Endothelial cell of umbilical vein (primary cell): ENCODE measurements at regions of chr16 and their contacts with region 1.

Region 1: DNA sequence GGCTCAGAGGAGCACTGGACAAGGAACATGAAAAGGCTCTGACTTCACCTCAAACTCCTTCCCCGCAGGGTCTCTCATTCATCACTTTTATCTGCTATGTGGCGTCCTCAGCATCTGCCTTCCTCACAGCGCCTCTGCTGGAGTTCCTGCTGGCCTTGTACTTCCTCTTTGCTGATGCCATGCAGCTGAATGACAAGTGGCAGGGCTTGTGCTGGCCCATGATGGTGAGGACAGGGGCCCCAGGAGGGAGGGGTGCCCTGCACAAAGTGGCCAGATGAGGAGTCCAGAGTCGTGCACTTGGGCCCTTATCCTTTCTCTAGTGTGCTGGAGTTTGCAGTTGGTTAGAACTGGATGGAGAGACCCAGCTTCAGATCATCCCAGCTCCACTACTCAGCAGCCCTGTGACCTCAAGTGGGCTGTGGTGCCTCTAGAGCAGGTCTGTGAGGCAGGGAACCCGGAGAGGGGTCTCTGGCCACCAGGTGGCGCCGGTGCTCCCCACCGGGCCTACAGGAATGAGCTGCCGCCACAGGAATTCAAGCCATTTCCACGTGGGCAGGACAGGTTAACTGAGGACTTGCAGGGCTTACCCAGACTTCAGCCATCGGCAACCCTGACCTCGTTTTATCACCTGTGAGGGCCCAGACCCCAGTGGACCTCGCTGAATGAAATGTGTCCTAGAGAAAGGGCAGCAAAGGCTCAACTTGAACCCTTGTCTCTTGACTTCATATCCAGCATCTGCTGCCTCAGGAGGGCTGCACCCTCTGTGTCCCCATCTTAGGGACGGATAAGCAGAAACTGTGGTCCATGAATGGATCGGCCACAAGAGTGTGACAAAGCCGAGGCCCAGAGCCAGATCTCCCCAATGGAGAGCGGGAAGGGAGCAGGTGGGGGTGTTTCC is 4.0 kb downstream of the CMTM3 start:
- DNase-seq: peak; percentile 77
- H3K4me3 ChIP-seq: no peak overlapping the region
- H3K27ac ChIP-seq: peak overlapping the region; percentile 28
- H3K4me1 ChIP-seq: peaks cover 17% of the 10 kb centered on the region
- H3K27me3 ChIP-seq: no peaks in the 10 kb centered on the region
- CTCF ChIP-seq: peak; percentile 99
- POLR2A ChIP-seq: no peak

Region 2: GRCh38 chr16:66357153-66357928 is 251.1 kb before region 1 on chr16:
- CTCF ChIA-PET with region 1: no interaction called
- POLR2A ChIA-PET with region 1: no interaction called
- dilution Hi-C with region 1: no loop called
- intact Hi-C with region 1: no loop called
- DNase-seq: peak; percentile 93
- H3K4me3 ChIP-seq: no peak overlapping the region
- H3K27ac ChIP-seq: peak overlapping the region; percentile 99
- H3K4me1 ChIP-seq: peaks cover 51% of the 10 kb centered on the region
- H3K27me3 ChIP-seq: no peaks in the 10 kb centered on the region
- CTCF ChIP-seq: peak; percentile 74 to 84
- POLR2A ChIP-seq: no peak

Region 3: GRCh38 chr16:66406534-66407221 is 201.8 kb before region 1 on chr16:
- CTCF ChIA-PET with region 1: interaction called, 28 read pairs
- POLR2A ChIA-PET with region 1: no interaction called
- dilution Hi-C with region 1: no loop called
- intact Hi-C with region 1: loop called (anchors 1 kb)
- DNase-seq: peak; percentile 75
- H3K4me3 ChIP-seq: peak overlapping the region in 2 of 3 experiments; percentile 12 to 31
- H3K27ac ChIP-seq: peak overlapping the region; percentile 27
- H3K4me1 ChIP-seq: peaks cover 34% of the 10 kb centered on the region
- H3K27me3 ChIP-seq: no peaks in the 10 kb centered on the region
- CTCF ChIP-seq: peak; percentile 81
- POLR2A ChIP-seq: peak; percentile 76

Region 4: GRCh38 chr16:66552286-66553177 is 56.0 kb before region 1 on chr16 and contains the start of gene CKLF:
- CTCF ChIA-PET with region 1: interaction called, 10 read pairs
- POLR2A ChIA-PET with region 1: no interaction called
- dilution Hi-C with region 1: no loop called
- intact Hi-C with region 1: loop called (anchors 2 kb)
- DNase-seq: peak; percentile 96
- H3K4me3 ChIP-seq: peak within 1 kb of the TSS; percentile 13 to 65 (median 57)
- H3K27ac ChIP-seq: peak within 1 kb of the TSS; percentile 65
- H3K4me1 ChIP-seq: peaks cover 32% of the 10 kb centered on the region
- H3K27me3 ChIP-seq: no peaks in the 10 kb centered on the region
- CTCF ChIP-seq: no peak
- POLR2A ChIP-seq: peak; percentile 83
- total RNA-seq, gene CKLF: 80.0 and 93.4 TPM in 2 replicates

Region 5: DNA sequence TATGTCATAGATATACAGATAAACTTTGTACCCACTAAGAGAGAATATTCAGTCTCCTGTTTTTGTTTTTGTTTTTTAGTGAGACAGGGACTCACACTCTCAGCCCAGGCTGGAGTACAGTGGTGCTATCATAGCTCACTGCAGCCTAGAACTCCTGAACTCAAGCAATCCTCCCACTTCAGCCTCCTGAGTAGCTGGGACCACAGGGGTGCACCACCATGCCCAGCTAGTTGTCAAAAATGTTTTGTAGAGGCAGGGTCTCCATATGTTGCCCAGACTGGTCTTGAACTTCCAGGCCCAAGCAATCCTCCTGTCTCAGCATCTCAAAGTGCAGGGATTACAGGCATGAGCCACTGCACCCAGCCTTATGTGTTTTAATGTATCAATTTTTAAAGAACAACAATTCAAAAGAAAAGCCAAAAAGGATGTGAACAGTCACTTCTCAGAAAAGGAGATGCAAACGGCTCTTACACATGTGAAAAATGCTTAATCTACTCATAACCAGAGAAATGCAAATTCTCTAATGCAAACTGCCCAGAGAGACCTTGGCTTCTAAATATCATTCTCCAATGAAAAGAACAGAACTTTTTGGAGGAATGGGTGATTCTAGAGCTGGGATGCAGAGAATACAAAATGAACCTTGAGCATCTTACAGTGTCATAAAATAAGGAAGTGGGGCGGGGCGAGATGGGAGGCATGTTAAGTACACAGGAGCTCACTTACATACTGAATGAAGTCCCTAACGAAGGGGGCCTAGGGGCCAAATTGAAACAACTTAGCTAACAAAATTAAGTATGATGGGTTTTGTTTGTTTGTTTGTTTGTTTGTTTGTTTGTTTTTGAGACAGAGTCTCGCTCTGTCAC is 11.3 kb before region 1 on chr16:
- CTCF ChIA-PET with region 1: interaction called, 26 read pairs
- POLR2A ChIA-PET with region 1: no interaction called
- dilution Hi-C with region 1: no loop called
- intact Hi-C with region 1: no loop called
- DNase-seq: no peak
- H3K4me3 ChIP-seq: no peak overlapping the region
- H3K27ac ChIP-seq: no peak overlapping the region
- H3K4me1 ChIP-seq: no peaks in the 10 kb centered on the region
- H3K27me3 ChIP-seq: peaks cover 0 to 13% of the 10 kb centered on the region in 2 experiments
- CTCF ChIP-seq: no peak
- POLR2A ChIP-seq: no peak

Region 6: DNA sequence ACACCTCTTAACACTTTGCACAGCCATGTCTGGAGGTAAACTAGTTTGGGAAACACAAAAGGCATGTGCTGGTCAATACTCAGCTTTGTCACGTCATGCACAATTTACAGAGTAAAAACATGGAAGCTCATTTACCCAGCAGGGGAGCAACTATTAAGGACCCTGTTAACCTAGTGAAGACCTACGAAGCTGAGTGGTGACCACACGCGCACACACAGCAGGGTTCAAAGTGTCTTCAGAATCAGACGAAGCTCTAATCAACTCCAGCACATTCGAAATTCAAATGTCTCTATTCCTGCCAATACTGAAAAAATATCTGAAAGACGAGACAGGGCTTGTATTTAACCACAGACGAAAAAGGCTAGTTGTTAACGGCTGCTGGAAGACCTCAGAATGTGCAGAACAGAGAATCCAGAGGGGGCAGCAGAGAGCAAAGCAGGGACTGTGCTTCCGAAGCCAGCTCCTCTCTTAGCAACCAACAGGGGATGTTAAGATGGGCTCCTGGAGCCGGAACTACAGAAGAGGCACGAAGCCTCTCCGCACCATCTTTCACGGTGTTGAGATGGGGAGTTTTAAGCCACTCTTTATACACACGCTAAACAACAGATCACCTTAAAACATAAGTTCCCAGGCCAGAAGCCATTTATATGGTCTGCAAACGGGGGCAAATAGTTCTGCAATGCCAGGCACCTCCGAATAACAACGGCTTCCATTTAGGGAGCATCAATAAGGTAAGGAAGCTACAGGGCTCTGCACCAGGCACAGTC is 42.4 kb after region 1 on chr16:
- CTCF ChIA-PET with region 1: interaction called, 67 read pairs
- POLR2A ChIA-PET with region 1: no interaction called
- dilution Hi-C with region 1: no loop called
- intact Hi-C with region 1: no loop called
- DNase-seq: peak; percentile 81
- H3K4me3 ChIP-seq: no peak overlapping the region
- H3K27ac ChIP-seq: no peak overlapping the region
- H3K4me1 ChIP-seq: no peaks in the 10 kb centered on the region
- H3K27me3 ChIP-seq: no peaks in the 10 kb centered on the region
- CTCF ChIP-seq: peak; percentile 94
- POLR2A ChIP-seq: no peak

Region 7: GRCh38 chr16:66740010-66740409 is 131.5 kb after region 1 on chr16:
- CTCF ChIA-PET with region 1: interaction called, 31 read pairs
- POLR2A ChIA-PET with region 1: no interaction called
- dilution Hi-C with region 1: no loop called
- intact Hi-C with region 1: loop called (anchors 5 kb)
- DNase-seq: peak; percentile 54
- H3K4me3 ChIP-seq: no peak overlapping the region
- H3K27ac ChIP-seq: peak overlapping the region; percentile 97
- H3K4me1 ChIP-seq: peaks cover 34% of the 10 kb centered on the region
- H3K27me3 ChIP-seq: no peaks in the 10 kb centered on the region
- CTCF ChIP-seq: peak; percentile 58 to 60
- POLR2A ChIP-seq: no peak